ENCODE measurements at regions of chr11 and their contacts with region 1.

Region 1: GRCh38 chr11:111841370-111842053 is 29.9 kb downstream of the ALG9 start:
- DNase-seq: peak; percentile 69
- ATAC-seq: peak; percentile 84
- H3K4me3 Mint-ChIP-seq: no peak overlapping the region
- H3K27ac Mint-ChIP-seq: no peak overlapping the region
- H3K4me1 Mint-ChIP-seq: peaks cover 2% of the 10 kb centered on the region
- H3K27me3 Mint-ChIP-seq: no peaks in the 10 kb centered on the region
- CTCF ChIP-seq: peak; percentile 86

Region 2: GRCh38 chr11:111586388-111586831 is 255.1 kb before region 1 on chr11:
- CTCF ChIA-PET with region 1: interaction called, 20 read pairs
- POLR2A ChIA-PET with region 1: no interaction called
- intact Hi-C with region 1: loop called (anchors 1 kb)
- DNase-seq: no peak
- ATAC-seq: peak; percentile 61
- H3K4me3 Mint-ChIP-seq: no peak overlapping the region
- H3K27ac Mint-ChIP-seq: no peak overlapping the region
- H3K4me1 Mint-ChIP-seq: peaks cover 4% of the 10 kb centered on the region
- H3K27me3 Mint-ChIP-seq: peaks cover 2% of the 10 kb centered on the region
- CTCF ChIP-seq: peak; percentile 69

Region 3: DNA sequence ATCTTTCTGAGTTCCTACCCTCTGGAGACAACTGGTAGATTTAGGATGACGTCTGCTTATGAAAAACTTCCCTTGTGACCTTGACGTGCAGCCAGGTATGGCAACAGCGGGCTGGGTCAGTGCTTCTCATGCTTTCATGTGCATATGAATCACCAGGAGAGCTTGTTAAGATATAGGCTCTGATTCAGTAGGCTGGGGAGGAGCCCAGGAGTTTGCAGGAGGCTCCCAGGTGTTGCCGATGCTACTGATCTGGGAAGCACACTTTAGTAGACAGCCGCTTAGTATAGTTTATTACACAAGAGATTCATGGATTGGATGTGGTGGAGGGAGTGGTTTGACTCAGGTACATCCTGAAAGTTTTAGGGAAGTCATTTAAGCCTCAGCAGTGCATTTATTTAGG is 119.4 kb after region 1 on chr11:
- CTCF ChIA-PET with region 1: no interaction called
- POLR2A ChIA-PET with region 1: no interaction called
- intact Hi-C with region 1: no loop called
- DNase-seq: no peak
- ATAC-seq: no peak
- H3K4me3 Mint-ChIP-seq: no peak overlapping the region
- H3K27ac Mint-ChIP-seq: no peak overlapping the region
- H3K4me1 Mint-ChIP-seq: no peaks in the 10 kb centered on the region
- H3K27me3 Mint-ChIP-seq: peaks cover 3% of the 10 kb centered on the region
- CTCF ChIP-seq: no peak

Measured in activated B cell treated with CpG ODN at 0.5 μM for 24 hours (primary cell).